CD4-positive, alpha-beta memory T cell (primary cell): ENCODE measurements at regions of chr2 and their contacts with region 1.

Region 1: DNA sequence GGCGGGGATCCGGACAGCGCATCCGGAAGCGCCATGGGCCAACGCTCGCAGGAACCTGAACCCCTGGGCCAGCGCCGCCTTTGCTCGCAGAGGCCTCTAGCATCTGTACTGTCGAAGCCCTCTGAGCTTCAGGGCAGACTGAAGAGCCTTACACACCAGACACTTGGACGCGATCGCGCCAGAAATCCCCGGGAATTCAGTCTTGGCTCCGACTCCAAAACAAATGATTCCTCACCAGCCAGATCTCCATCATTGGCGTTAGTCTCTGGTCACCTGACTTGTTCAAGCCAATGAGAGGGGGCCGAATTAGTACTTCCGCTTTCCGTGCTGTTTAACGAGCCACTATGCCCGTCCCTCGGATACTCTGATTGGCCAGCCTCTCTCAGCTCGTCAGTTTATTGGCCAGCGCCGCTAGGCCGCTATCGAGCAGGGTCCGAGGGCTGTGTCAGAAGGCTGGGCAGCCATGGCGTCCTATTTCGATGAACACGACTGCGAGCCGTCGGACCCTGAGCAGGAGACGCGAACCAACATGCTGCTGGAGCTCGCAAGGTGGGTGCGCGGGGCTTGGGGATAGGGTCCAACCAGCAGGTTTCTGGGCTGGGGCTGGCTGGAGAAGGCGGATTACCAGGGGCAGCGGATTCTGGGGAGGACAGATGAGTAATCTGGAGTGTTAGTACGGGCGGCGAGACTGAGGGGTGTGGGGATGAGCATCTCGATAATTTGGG is at the start of gene RNF181:
- DNase-seq: peak; percentile 88 to 97 (median 91)
- H3K4me3 ChIP-seq: peak within 1 kb of the TSS; percentile 49 to 96
- H3K4me3 Mint-ChIP-seq: peak within 1 kb of the TSS; percentile 96 to 99 (median 98)
- H3K27ac ChIP-seq: peak within 1 kb of the TSS; percentile 86
- H3K27ac Mint-ChIP-seq: peak within 1 kb of the TSS; percentile 95 to 99 (median 97)
- H3K4me1 ChIP-seq: peaks cover 26% of the 10 kb centered on the region
- H3K4me1 Mint-ChIP-seq: peaks cover 25 to 42% (median 32%) of the 10 kb centered on the region in 4 donors
- H3K27me3 ChIP-seq: no peaks in the 10 kb centered on the region
- H3K27me3 Mint-ChIP-seq: no peaks in the 10 kb centered on the region
- total RNA-seq, gene RNF181: 73.6 to 77.1 TPM

Region 2: DNA sequence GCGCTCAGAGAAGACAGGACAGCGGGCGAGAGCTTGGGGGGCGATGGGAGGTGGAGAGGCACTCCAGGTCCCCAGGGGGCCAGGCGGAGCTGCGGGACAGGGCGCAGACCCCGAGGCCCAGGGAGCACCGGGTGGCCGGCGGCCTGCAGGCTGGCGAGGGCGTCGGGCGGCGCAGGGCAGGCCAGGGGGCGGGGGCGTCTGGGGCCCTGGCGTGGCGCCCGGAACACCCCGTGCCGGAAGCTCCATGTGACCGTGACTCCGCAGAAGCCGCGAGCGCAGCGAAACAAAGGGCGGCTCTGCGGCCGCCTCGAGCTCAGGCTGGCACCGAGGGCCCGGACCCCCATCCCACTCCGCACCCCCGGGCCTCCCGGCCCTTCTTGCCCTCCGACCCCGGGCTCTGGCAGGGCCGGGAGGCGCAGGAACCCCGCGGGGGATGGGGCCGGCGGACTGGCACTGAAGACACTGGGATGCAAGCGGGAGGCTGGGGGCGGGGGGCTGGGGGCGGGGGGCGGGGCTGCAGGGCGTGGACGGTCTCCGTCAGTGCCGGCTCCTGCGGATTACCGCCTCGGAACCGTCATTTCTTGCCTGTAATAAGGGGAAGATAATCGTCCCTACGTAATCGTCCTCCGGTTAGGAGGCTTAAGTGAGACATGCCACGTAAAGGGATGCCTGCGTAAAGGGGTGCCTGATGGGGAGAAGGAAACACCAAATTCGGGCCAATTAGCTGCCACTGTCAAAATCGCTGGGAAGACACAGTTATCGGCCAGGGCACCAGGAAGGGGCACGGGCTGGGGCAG is 157.8 kb before region 1 on chr2:
- CTCF ChIA-PET with region 1: no interaction called
- POLR2A ChIA-PET with region 1: interaction called, 10 read pairs
- intact Hi-C with region 1: loop called (anchors 5 kb)
- DNase-seq: peak; percentile 77 to 88 (median 81)
- H3K4me3 ChIP-seq: peak overlapping the region; percentile 36 to 52
- H3K4me3 Mint-ChIP-seq: peak overlapping the region; percentile 87 to 95 (median 91)
- H3K27ac ChIP-seq: peak overlapping the region; percentile 75
- H3K27ac Mint-ChIP-seq: peak overlapping the region; percentile 88 to 99 (median 98)
- H3K4me1 ChIP-seq: peaks cover 30% of the 10 kb centered on the region
- H3K4me1 Mint-ChIP-seq: peaks cover 9 to 38% (median 25%) of the 10 kb centered on the region in 4 donors
- H3K27me3 ChIP-seq: no peaks in the 10 kb centered on the region
- H3K27me3 Mint-ChIP-seq: no peaks in the 10 kb centered on the region

Region 3: GRCh38 chr2:85525567-85525966 is 69.9 kb before region 1 on chr2:
- CTCF ChIA-PET with region 1: no interaction called
- POLR2A ChIA-PET with region 1: no interaction called
- intact Hi-C with region 1: no loop called
- DNase-seq: no peak
- H3K4me3 ChIP-seq: no peak overlapping the region
- H3K4me3 Mint-ChIP-seq: no peak overlapping the region
- H3K27ac ChIP-seq: no peak overlapping the region
- H3K27ac Mint-ChIP-seq: no peak overlapping the region
- H3K4me1 ChIP-seq: no peaks in the 10 kb centered on the region
- H3K4me1 Mint-ChIP-seq: no peaks in the 10 kb centered on the region
- H3K27me3 ChIP-seq: no peaks in the 10 kb centered on the region
- H3K27me3 Mint-ChIP-seq: peaks cover 3 to 7% of the 10 kb centered on the region in 2 donors

Region 4: DNA sequence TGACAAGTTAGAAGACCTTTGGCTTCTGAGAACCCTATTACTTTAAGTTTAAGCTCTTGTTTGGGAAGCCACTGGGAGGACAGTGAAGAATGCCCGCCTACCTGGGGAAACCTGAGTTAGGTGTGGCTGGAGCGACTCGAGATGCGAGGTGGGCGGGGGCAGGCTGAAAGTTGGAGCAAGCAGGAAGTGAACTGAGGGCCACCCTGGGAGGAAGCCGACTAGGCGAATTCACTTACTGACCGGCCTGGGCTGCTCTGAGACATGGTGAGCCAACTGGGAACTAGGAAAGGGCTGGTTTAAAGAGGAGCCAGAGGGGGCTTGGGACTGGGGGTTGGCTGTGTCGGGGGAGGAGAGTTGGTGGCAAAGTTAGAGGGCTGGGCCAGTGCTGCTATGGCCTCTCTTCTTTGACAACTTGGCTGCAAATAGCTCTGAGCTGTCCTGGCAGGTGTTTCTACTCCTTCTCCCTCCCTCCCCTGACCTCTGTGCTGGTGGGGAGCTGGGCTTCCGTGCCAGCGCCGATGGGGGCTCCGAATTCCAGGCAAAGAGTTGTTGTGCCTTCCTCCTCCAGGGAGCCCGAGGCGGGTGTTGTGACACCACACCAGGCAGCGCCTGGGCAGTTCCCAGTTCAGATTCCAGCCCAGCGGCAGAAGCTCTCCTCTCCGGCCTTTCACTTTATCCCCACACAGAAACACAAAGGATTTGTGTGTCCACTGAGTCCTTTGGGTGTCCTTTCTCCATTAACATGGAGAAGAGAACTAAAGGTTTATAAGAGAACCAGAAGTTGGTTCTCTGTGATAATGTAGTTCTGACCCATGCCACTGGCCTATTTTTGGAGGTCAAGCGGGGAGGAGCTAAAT is 17.8 kb before region 1 on chr2 and contains the start of gene VAMP8:
- CTCF ChIA-PET with region 1: no interaction called
- POLR2A ChIA-PET with region 1: interaction called, 50 read pairs
- intact Hi-C with region 1: loop called (anchors 2 kb)
- DNase-seq: peak; percentile 48 to 75 (median 57)
- H3K4me3 ChIP-seq: peak within 1 kb of the TSS; percentile 62 to 86
- H3K4me3 Mint-ChIP-seq: peak within 1 kb of the TSS; percentile 90 to 98 (median 96)
- H3K27ac ChIP-seq: peak within 1 kb of the TSS; percentile 76
- H3K27ac Mint-ChIP-seq: peak within 1 kb of the TSS; percentile 86 to 98 (median 93)
- H3K4me1 ChIP-seq: peaks cover 30% of the 10 kb centered on the region
- H3K4me1 Mint-ChIP-seq: peaks cover 20 to 48% (median 36%) of the 10 kb centered on the region in 4 donors
- H3K27me3 ChIP-seq: no peaks in the 10 kb centered on the region
- H3K27me3 Mint-ChIP-seq: no peaks in the 10 kb centered on the region
- total RNA-seq, gene VAMP8: 98.5 to 107 TPM

Region 5: DNA sequence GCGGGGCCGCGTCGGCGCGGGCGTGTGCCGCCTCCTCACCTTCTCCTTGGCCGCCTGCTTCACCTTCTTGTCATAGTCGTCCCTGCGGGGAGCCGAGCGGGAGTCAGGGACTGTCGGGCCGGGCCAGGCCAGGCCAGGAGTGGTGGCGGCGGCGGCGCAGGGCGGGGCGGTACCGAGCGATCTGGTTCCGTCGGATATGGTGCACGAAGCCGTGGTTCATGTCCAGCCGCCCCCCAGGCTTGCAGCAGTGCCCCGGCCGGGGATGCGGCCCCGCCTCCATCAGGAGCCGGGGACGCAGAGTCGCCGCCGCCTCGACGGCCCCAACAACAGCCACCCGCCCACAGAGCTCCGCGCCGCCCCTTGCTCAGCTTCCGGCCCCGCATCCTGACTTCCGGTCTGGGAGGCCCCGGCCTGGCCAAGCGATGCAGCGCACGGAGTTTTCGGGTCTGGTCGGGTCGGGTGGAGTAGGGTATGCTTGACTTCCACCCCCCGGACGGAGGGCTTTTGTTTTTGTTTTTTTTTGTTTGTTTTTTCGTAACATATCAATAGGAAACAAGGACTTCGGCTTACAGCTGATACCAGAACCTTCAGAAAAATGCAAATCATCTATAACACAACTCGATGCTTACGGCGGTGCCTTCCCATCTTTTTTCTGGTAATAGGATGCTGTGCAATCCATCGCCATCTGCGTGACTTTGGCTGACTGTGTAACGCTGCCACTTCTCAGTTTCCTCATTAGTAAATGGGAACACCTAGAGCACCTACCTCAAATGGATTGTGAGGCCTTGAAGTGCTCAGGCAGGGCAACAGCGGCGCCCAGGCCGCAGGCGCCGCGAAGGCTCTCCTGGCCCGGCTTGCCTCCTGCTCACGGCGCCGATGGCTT is 16.5 kb after region 1 on chr2 and contains the start of gene C2orf68:
- CTCF ChIA-PET with region 1: interaction called, 4 read pairs
- POLR2A ChIA-PET with region 1: interaction called, 86 read pairs
- intact Hi-C with region 1: loop called (anchors 1 kb)
- DNase-seq: peak; percentile 77 to 86 (median 77)
- H3K4me3 ChIP-seq: peak within 1 kb of the TSS; percentile 57 to 86
- H3K4me3 Mint-ChIP-seq: peak within 1 kb of the TSS; percentile 96 to 100 (median 98)
- H3K27ac ChIP-seq: peak within 1 kb of the TSS; percentile 72
- H3K27ac Mint-ChIP-seq: peak within 1 kb of the TSS; percentile 94 to 97 (median 97)
- H3K4me1 ChIP-seq: peaks cover 30% of the 10 kb centered on the region
- H3K4me1 Mint-ChIP-seq: peaks cover 13 to 41% (median 25%) of the 10 kb centered on the region in 4 donors
- H3K27me3 ChIP-seq: no peaks in the 10 kb centered on the region
- H3K27me3 Mint-ChIP-seq: no peaks in the 10 kb centered on the region
- total RNA-seq, gene C2orf68: 87.3 to 89.9 TPM

Region 6: DNA sequence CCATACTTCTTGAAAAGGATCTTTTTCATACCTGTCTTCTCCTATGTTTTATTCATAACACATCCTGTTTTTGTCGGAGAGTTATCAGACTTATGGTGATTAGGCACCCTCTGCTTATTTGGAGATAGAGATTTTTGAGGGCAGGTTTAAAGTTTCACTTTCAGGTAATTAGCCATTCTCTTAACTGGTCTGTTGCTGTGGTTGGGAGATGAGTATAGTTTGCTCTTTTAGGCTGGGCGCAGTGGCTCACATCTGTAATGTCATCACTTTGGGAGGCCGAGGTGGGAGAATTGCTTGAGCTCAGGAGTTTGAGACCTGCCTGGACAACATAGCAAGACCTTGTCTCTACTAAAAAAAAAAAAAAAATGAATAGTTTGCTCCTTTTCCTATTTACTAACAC is 47.3 kb after region 1 on chr2:
- CTCF ChIA-PET with region 1: interaction called, 15 read pairs
- POLR2A ChIA-PET with region 1: interaction called, 10 read pairs
- intact Hi-C with region 1: no loop called
- DNase-seq: peak in 1 of 5 donors; percentile 8
- H3K4me3 ChIP-seq: no peak overlapping the region
- H3K4me3 Mint-ChIP-seq: peak overlapping the region in 4 of 8 donors; percentile 2 to 52 (median 23)
- H3K27ac ChIP-seq: no peak overlapping the region
- H3K27ac Mint-ChIP-seq: peak overlapping the region; percentile 6 to 90 (median 57)
- H3K4me1 ChIP-seq: no peaks in the 10 kb centered on the region
- H3K4me1 Mint-ChIP-seq: peaks cover 6 to 13% (median 10%) of the 10 kb centered on the region in 4 donors
- H3K27me3 ChIP-seq: no peaks in the 10 kb centered on the region
- H3K27me3 Mint-ChIP-seq: no peaks in the 10 kb centered on the region

Region 7: DNA sequence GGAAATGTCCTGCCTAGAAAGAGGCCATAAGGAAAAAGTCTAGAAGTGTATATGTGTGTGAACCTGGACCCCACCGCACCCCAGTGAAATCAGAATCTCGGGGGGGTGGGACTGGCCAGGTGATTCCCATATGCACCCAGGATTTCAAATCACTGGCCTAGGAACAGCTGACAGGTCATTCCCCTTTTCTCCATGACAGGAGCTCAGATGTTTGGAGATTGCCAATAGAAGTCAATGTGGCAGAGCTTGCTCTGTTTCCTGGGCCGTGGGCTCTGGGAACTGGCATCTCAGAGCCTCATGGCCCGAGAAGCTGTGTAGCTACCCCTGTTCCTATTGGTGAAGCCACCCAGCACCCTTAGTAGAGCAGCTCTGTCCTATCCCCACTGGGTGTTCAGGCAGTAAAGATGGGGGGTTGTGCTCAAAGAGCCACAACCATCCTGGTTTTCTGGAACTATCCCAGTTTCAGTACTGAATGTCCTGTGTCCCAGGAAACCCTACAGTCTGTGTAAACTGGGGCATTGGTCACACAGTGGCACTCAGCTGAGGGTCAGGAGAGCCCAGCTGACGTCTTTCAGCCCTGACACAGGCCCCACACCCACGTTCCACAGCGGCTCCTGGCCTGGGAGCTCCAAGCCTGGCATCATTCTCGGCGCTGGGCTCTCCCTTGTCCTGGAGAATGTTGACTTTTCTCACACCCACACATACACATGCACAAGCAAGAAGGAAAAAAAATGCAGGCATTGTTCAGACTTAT is 117.6 kb after region 1 on chr2:
- CTCF ChIA-PET with region 1: no interaction called
- POLR2A ChIA-PET with region 1: no interaction called
- intact Hi-C with region 1: no loop called
- DNase-seq: no peak
- H3K4me3 ChIP-seq: no peak overlapping the region
- H3K4me3 Mint-ChIP-seq: no peak overlapping the region
- H3K27ac ChIP-seq: no peak overlapping the region
- H3K27ac Mint-ChIP-seq: no peak overlapping the region
- H3K4me1 ChIP-seq: peaks cover 5% of the 10 kb centered on the region
- H3K4me1 Mint-ChIP-seq: peaks cover 0 to 5% (median 5%) of the 10 kb centered on the region in 4 donors
- H3K27me3 ChIP-seq: peaks cover 3% of the 10 kb centered on the region
- H3K27me3 Mint-ChIP-seq: peaks cover 0 to 4% of the 10 kb centered on the region in 2 donors